Activated CD8-positive, alpha-beta T cell treated with anti-CD3 and anti-CD28 coated beads for 36 hours (primary cell): ENCODE measurements at regions of chr12 and their contacts with region 1.

Region 1: GRCh38 chr12:47223848-47224213 is 144.1 kb upstream of the AMIGO2 start:
- DNase-seq: no peak
- ATAC-seq: no peak
- H3K4me3 Mint-ChIP-seq: peak overlapping the region; percentile 74
- H3K27ac Mint-ChIP-seq: peak overlapping the region; percentile 88
- H3K4me1 Mint-ChIP-seq: peaks cover 73% of the 10 kb centered on the region
- H3K27me3 Mint-ChIP-seq: no peaks in the 10 kb centered on the region
- CTCF ChIP-seq: no peak

Region 2: GRCh38 chr12:47270782-47271664 is 47.2 kb after region 1 on chr12:
- CTCF ChIA-PET with region 1: interaction called, 4 read pairs
- POLR2A ChIA-PET with region 1: interaction called, 6 read pairs
- intact Hi-C with region 1: loop called (anchors 5 kb)
- DNase-seq: peak; percentile 70
- ATAC-seq: peak; percentile 77
- H3K4me3 Mint-ChIP-seq: peak overlapping the region; percentile 51
- H3K27ac Mint-ChIP-seq: peak overlapping the region; percentile 84
- H3K4me1 Mint-ChIP-seq: peaks cover 66% of the 10 kb centered on the region
- H3K27me3 Mint-ChIP-seq: no peaks in the 10 kb centered on the region
- CTCF ChIP-seq: no peak

Region 3: DNA sequence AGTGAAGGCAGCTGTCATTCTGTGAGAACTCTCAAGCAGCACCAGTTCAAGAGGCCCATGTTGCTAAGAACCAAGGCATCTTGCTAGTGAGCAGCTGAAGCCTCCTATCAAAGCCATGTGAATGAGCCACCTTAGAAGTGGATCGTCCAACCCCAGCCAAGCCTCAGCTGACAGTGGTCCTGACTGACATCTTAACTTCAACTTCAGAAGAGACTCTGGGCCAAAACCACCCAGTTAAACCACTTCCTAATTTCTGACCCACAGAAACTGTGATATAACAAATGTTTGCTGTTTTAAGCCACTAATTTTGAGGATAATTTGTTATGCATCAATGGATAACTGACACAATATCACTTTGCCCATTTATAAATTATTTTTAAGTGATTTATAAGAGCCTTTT is 226.0 kb after region 1 on chr12:
- CTCF ChIA-PET with region 1: no interaction called
- POLR2A ChIA-PET with region 1: no interaction called
- intact Hi-C with region 1: no loop called
- DNase-seq: no peak
- ATAC-seq: no peak
- H3K4me3 Mint-ChIP-seq: no peak overlapping the region
- H3K27ac Mint-ChIP-seq: no peak overlapping the region
- H3K4me1 Mint-ChIP-seq: no peaks in the 10 kb centered on the region
- H3K27me3 Mint-ChIP-seq: no peaks in the 10 kb centered on the region
- CTCF ChIP-seq: no peak